Dorsolateral prefrontal cortex (tissue), 120 donors: ENCODE measurements at regions of chr20 and their contacts with region 1.

Region 1: GRCh38 chr20:25247956-25248785 is at the start of gene PYGB:
- DNase-seq: peak; percentile 60 to 90 (median 77)
- H3K4me3 ChIP-seq: peak within 1 kb of the TSS; percentile 64 to 97 (median 88)
- H3K27ac ChIP-seq: peak within 1 kb of the TSS; percentile 63 to 98 (median 91)
- H3K27me3 ChIP-seq: no peaks in the 10 kb centered on the region
- CTCF ChIP-seq: peak in 11 of 56 donors; percentile 4 to 17 (median 8)
- total RNA-seq, gene PYGB: 83.2 to 226 (median 146) TPM

Region 2: DNA sequence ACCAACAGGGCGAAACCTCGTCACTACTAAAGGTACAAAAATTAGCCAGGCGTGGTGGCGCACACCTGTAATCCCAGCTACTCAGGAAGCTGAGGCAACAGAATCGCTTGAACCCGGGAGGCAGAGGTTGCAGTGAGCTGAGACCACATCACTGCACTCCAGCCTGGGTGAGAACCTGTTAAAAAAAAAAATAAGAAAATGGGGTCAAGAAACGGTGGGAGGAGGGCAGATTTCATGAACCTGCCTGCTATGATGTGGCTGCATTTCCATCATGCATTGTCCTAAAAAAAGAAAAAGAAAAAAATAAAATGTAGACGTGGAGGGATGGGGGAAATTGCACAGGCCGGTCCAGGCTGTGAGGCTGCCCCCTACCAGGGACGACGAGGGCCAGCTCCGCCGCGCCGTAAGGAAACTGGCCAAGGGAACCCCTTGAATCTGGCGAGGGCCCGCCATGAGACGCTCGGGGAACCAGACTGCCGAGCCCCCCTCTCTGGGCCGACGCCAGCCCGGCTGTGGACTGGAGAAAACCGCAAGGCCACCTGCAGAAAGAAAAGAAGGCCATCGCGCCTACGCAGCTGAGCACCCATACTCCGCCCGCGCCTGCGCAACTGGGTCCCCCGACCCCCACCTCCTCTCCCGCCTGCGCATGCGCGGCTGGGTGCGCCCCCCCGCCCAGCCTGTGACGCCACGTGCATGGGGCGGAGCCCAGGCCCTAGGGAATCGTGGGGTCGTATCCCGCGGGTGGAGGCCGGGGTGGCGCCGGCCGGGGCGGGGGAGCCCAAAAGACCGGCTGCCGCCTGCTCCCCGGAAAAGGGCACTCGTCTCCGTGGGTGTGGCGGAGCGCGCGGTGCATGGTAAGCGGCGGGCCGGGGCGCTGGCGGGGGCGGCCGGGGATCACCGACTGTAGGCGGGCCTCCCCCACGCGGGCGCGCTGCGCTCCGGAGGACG is 52.9 kb before region 1 on chr20 and contains the start of gene ENTPD6:
- intact Hi-C with region 1: loop called (anchors 1 to 2 kb)
- DNase-seq: peak; percentile 84 to 97 (median 90)
- H3K4me3 ChIP-seq: peak within 1 kb of the TSS; percentile 77 to 100 (median 95)
- H3K27ac ChIP-seq: peak within 1 kb of the TSS; percentile 79 to 100 (median 94)
- H3K27me3 ChIP-seq: no peaks in the 10 kb centered on the region
- CTCF ChIP-seq: peak in 51 of 56 donors; percentile 14 to 70 (median 44)
- total RNA-seq, gene ENTPD6: 90.8 to 200 (median 142) TPM

Region 3: GRCh38 chr20:25294459-25295385 is 46.6 kb after region 1 on chr20:
- intact Hi-C with region 1: loop called in 1 of 2 experiments (anchors 5 kb)
- DNase-seq: peak in 8 of 10 donors; percentile 63 to 83 (median 69)
- H3K4me3 ChIP-seq: no peak overlapping the region
- H3K27ac ChIP-seq: peak overlapping the region in 55 of 59 donors; percentile 5 to 85 (median 73)
- H3K27me3 ChIP-seq: no peaks in the 10 kb centered on the region
- CTCF ChIP-seq: peak; percentile 38 to 96 (median 88)

Region 4: GRCh38 chr20:25390538-25391528 is 142.7 kb after region 1 on chr20 and contains the start of gene ABHD12:
- intact Hi-C with region 1: loop called (anchors 1 to 2 kb)
- DNase-seq: peak; percentile 94 to 97 (median 95)
- H3K4me3 ChIP-seq: peak within 1 kb of the TSS; percentile 66 to 99 (median 89)
- H3K27ac ChIP-seq: peak within 1 kb of the TSS; percentile 53 to 96 (median 92)
- H3K27me3 ChIP-seq: no peaks in the 10 kb centered on the region
- CTCF ChIP-seq: peak in 41 of 56 donors; percentile 9 to 60 (median 32)
- total RNA-seq, gene ABHD12: 79.8 to 142 (median 109) TPM